Tibial artery (tissue), 4 donors: ENCODE measurements at regions of chr7 and their contacts with region 1.

Region 1: DNA sequence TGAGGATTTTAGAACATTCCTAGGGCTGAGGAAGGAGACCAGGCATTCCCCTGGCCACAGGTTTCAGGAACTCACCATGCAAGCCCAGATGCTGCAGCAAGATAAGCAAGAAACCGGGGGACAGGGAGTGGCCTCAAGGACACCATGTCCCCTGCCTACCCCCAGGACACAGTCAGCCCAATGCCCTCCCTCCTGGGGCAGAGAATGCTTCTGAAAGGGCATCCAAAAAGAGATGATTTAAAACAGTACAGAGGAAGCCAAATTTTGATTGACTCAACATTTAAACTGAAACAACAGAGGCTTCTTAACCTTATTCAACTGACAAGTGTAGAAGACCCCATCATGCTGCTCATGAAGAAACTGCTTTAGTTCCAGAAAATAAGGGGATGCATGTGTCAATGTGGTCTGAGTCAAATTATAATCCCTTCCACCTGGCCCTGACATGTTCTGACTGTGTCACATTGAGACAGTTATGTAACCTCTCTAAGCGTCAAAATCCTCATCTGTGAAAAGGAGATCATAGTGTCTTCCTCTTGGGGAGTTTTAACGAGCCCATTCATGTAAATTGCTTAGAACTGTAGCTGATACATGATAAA is 60.0 kb downstream of the ICA1 start:
- DNase-seq: no peak
- H3K4me3 ChIP-seq: no peak overlapping the region
- H3K27ac ChIP-seq: no peak overlapping the region
- H3K4me1 ChIP-seq: peaks cover 0 to 26% (median 8%) of the 10 kb centered on the region in 4 donors
- H3K27me3 ChIP-seq: no peaks in the 10 kb centered on the region
- CTCF ChIP-seq: no peak

Region 2: DNA sequence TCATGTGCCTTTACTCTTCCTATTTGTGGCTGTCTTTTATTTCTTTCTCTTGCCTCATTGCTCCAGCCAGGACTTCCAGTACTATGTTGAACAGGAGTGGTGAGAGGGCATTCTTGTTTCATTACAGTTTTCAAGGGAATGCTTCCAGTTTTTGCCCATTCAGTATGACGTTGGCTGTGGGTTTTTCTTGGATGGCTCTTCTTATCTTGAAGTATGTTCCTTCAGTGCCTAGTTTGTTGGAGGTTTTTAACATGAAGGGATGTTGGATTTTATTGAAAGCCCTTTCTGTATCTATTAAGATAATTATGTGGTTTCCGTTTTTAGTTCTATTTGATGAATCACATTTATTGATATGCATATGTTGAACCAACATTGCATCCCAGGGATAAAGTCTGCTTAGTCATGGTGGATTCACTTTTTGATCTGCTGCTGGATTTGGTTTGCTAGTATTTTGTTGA is 136.6 kb before region 1 on chr7:
- intact Hi-C with region 1: loop called (anchors 10 kb)
- DNase-seq: no peak
- H3K4me3 ChIP-seq: peak overlapping the region; percentile 18 to 28
- H3K27ac ChIP-seq: peak overlapping the region; percentile 72 to 80
- H3K4me1 ChIP-seq: peaks cover 0 to 14% (median 3%) of the 10 kb centered on the region in 4 donors
- H3K27me3 ChIP-seq: no peaks in the 10 kb centered on the region
- CTCF ChIP-seq: no peak